Activated CD4-positive, alpha-beta memory T cell treated with anti-CD3 and anti-CD28 coated beads for 36 hours (primary cell): ENCODE measurements at regions of chr14 and their contacts with region 1.

Region 1: DNA sequence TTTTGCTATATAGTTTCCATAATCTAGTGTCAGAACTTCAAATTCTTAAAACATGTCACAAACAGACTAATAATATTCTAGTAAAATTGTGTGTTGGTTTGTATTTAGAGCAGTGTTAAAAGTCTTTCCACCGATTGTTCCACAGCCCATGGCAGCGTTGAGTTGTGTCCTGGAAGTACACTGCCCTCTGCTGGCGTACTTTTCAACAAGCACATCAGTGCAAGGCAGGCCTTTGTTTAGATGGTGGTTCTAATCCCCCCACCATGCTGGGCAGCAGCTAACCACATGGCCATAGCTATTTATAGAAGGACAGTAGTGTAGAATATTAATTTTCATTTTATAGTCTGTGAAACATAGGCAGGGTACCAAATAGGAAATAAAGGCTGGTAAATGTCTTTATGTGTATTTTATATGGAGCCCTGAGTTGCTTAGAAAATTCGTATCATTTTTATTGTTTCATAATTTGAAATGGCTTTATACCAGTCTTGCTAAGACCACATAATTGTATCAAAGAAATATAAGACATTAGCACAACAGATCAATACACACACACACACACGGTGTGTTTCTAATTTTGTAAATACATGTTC is 235.4 kb downstream of the SEC23A start:
- DNase-seq: peak; percentile 62
- H3K4me3 Mint-ChIP-seq: no peak overlapping the region
- H3K27ac Mint-ChIP-seq: no peak overlapping the region
- H3K4me1 Mint-ChIP-seq: no peaks in the 10 kb centered on the region
- H3K27me3 Mint-ChIP-seq: peaks cover 4% of the 10 kb centered on the region

Region 2: DNA sequence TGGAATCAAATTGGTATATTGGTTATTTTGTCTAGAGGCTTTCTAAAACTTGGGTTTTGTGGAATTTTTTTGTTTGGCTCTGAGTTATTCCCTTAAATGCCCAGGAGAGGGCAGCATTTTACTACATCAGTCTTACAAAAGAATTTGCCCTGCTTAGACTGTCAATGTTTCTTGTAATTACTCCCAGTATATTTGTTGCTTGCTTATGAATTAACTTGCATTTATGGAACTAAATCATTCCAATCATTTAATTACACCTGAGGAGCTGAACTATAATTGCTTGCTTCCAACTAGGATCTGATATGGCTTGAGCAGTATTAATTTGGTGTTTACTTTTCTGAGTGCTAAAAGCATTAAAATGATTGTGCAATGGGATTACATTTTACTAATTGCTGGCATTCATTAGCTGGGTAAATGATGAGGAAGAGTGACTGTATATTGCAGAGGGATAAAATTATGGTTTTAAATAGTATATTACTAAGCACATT is 1621.2 kb before region 1 on chr14:
- CTCF ChIA-PET with region 1: no interaction called
- POLR2A ChIA-PET with region 1: no interaction called
- intact Hi-C with region 1: loop called (anchors 5 kb)
- DNase-seq: no peak
- H3K4me3 Mint-ChIP-seq: no peak overlapping the region
- H3K27ac Mint-ChIP-seq: no peak overlapping the region
- H3K4me1 Mint-ChIP-seq: no peaks in the 10 kb centered on the region
- H3K27me3 Mint-ChIP-seq: peaks cover 1% of the 10 kb centered on the region

Region 3: GRCh38 chr14:37903343-37904191 is 964.1 kb before region 1 on chr14:
- CTCF ChIA-PET with region 1: interaction called, 7 read pairs
- POLR2A ChIA-PET with region 1: no interaction called
- intact Hi-C with region 1: loop called (anchors 1 kb)
- DNase-seq: peak; percentile 13
- H3K4me3 Mint-ChIP-seq: no peak overlapping the region
- H3K27ac Mint-ChIP-seq: no peak overlapping the region
- H3K4me1 Mint-ChIP-seq: peaks cover 4% of the 10 kb centered on the region
- H3K27me3 Mint-ChIP-seq: peaks cover 9% of the 10 kb centered on the region

Region 4: GRCh38 chr14:38578278-38578681 is 289.4 kb before region 1 on chr14:
- CTCF ChIA-PET with region 1: no interaction called
- POLR2A ChIA-PET with region 1: no interaction called
- intact Hi-C with region 1: no loop called
- DNase-seq: no peak
- H3K4me3 Mint-ChIP-seq: no peak overlapping the region
- H3K27ac Mint-ChIP-seq: no peak overlapping the region
- H3K4me1 Mint-ChIP-seq: no peaks in the 10 kb centered on the region
- H3K27me3 Mint-ChIP-seq: no peaks in the 10 kb centered on the region

Region 5: DNA sequence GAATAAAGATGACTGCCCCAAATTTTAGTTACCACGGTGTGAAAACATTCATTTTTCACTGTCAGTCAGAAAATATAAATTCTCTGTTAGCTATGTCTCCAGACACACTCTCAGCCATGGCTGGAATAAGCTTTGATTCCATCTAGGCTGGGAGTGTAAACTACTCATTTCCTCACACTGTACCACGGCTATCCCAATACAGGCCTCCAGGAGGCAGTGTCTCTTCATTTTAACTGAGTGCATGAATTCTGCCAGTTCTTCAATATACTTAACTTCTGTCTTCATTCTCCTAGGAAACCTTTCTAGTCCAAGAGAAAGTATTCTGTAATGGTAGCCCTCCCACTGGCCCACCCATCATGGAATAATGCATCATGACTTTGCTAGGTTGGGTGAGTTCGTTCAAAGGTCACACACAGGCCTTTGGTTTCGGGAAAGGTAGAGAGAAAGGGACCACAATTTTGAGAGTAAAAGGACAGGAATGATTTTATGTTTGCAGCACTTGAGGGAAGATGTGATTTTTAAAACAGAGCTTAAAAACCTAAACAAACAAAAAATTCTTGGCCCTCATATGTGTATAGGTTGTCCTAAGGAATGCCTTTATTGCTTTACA is 145.7 kb before region 1 on chr14:
- CTCF ChIA-PET with region 1: interaction called, 7 read pairs
- POLR2A ChIA-PET with region 1: no interaction called
- intact Hi-C with region 1: loop called (anchors 1 kb)
- DNase-seq: peak; percentile 52
- H3K4me3 Mint-ChIP-seq: no peak overlapping the region
- H3K27ac Mint-ChIP-seq: no peak overlapping the region
- H3K4me1 Mint-ChIP-seq: no peaks in the 10 kb centered on the region
- H3K27me3 Mint-ChIP-seq: no peaks in the 10 kb centered on the region

Region 6: DNA sequence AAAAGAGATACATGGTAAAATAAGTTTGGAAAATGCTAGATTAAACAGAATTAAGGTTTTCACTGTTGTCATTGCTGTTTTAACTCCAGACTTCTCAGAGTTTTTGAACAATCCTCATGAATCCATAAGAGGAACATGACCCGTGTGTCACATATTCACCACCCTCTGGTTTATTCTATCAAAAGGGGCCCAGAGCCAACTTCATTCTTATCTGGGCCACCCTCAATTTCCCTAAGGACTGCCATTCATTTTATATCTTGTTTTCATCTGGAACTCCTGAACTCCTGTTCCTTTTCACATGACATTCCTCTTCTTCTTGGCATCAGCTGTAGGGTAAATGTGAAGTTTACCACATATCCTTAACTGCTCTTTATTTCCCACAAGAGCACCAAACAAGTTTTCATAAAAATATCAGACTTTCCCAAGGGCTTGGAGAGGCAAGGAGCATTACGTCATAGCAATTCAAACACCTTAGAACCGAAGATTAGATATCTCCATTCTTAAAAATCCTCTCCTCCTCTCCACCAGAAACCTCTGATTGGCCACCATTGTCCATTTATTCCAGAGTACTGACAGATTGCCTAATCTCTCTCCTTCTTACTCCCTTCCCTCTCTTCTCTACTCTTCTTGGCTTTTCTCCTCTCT is 10.2 kb after region 1 on chr14:
- CTCF ChIA-PET with region 1: interaction called, 18 read pairs
- POLR2A ChIA-PET with region 1: no interaction called
- intact Hi-C with region 1: no loop called
- DNase-seq: no peak
- H3K4me3 Mint-ChIP-seq: no peak overlapping the region
- H3K27ac Mint-ChIP-seq: no peak overlapping the region
- H3K4me1 Mint-ChIP-seq: no peaks in the 10 kb centered on the region
- H3K27me3 Mint-ChIP-seq: peaks cover 15% of the 10 kb centered on the region